HepG2 (cell line): ENCODE measurements at regions of chr20 and their contacts with region 1.

Region 1: GRCh38 chr20:34579191-34579978 is 20.9 kb downstream of the MAP1LC3A start:
- DNase-seq: peak; percentile 45
- ATAC-seq: peak; percentile 72
- H3K4me3 ChIP-seq: no peak overlapping the region
- H3K27ac ChIP-seq: no peak overlapping the region
- H3K4me1 ChIP-seq: peaks cover 14% of the 10 kb centered on the region
- H3K27me3 ChIP-seq: no peaks in the 10 kb centered on the region
- CTCF ChIP-seq: peak; percentile 75
- EP300 ChIP-seq: no peak
- POLR2A ChIP-seq: no peak
- RAD21 ChIP-seq: peak; percentile 77

Region 2: GRCh38 chr20:34768096-34768495 is 188.7 kb after region 1 on chr20:
- CTCF ChIA-PET with region 1: interaction called, 25 read pairs
- POLR2A ChIA-PET with region 1: no interaction called
- in situ Hi-C with region 1: loop called (anchors 10 kb)
- intact Hi-C with region 1: no loop called
- DNase-seq: no peak
- ATAC-seq: no peak
- H3K4me3 ChIP-seq: no peak overlapping the region
- H3K27ac ChIP-seq: no peak overlapping the region
- H3K4me1 ChIP-seq: no peaks in the 10 kb centered on the region
- H3K27me3 ChIP-seq: no peaks in the 10 kb centered on the region
- CTCF ChIP-seq: no peak
- EP300 ChIP-seq: no peak
- POLR2A ChIP-seq: no peak
- RAD21 ChIP-seq: no peak